GM12878 (cell line): ENCODE measurements at regions of chr2 and their contacts with region 1.

Region 1: GRCh38 chr2:240060977-240061591 is 7.8 kb upstream of the OR6B3 start:
- DNase-seq: no peak
- ATAC-seq: peak; percentile 87
- H3K4me3 ChIP-seq: no peak overlapping the region
- H3K27ac ChIP-seq: no peak overlapping the region
- H3K4me1 ChIP-seq: no peaks in the 10 kb centered on the region
- H3K27me3 ChIP-seq: peaks cover 0 to 4% of the 10 kb centered on the region in 2 experiments; a peak in 2 of 4 replicates
- CTCF ChIP-seq: peak; percentile 51 to 62 (median 59)
- EP300 ChIP-seq: no peak
- POLR2A ChIP-seq: no peak
- RAD21 ChIP-seq: peak; percentile 69

Region 2: DNA sequence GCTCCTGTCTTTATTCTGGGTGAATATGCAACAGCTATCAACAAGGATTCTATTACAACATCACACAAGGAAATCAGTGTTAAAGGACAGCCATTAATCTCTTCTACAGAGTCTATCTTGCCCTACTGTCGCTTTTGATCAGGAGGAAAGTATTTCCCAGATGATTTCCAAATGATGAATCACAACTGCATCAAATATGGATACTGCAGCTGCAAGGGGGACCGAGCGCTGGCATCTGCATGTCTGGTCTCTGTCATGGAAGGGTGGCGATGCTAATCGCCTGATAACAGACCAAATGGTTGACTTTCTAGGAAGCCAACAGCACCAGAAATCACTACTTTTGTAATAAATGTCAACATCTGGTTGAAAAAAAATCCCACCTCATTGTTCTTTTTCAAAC is 13.5 kb after region 1 on chr2:
- CTCF ChIA-PET with region 1: interaction called, 10 read pairs
- POLR2A ChIA-PET with region 1: no interaction called
- RAD21 ChIA-PET with region 1: interaction called, 3 read pairs
- SMC1A ChIA-PET with region 1: interaction called, 6 read pairs
- in situ Hi-C with region 1: no loop called
- intact Hi-C with region 1: no loop called
- DNase-seq: no peak
- ATAC-seq: no peak
- H3K4me3 ChIP-seq: no peak overlapping the region
- H3K27ac ChIP-seq: no peak overlapping the region
- H3K4me1 ChIP-seq: no peaks in the 10 kb centered on the region
- H3K27me3 ChIP-seq: peaks cover 0 to 2% of the 10 kb centered on the region in 2 experiments; a peak in 1 of 4 replicates
- CTCF ChIP-seq: no peak
- EP300 ChIP-seq: no peak
- POLR2A ChIP-seq: no peak
- RAD21 ChIP-seq: no peak

Region 3: DNA sequence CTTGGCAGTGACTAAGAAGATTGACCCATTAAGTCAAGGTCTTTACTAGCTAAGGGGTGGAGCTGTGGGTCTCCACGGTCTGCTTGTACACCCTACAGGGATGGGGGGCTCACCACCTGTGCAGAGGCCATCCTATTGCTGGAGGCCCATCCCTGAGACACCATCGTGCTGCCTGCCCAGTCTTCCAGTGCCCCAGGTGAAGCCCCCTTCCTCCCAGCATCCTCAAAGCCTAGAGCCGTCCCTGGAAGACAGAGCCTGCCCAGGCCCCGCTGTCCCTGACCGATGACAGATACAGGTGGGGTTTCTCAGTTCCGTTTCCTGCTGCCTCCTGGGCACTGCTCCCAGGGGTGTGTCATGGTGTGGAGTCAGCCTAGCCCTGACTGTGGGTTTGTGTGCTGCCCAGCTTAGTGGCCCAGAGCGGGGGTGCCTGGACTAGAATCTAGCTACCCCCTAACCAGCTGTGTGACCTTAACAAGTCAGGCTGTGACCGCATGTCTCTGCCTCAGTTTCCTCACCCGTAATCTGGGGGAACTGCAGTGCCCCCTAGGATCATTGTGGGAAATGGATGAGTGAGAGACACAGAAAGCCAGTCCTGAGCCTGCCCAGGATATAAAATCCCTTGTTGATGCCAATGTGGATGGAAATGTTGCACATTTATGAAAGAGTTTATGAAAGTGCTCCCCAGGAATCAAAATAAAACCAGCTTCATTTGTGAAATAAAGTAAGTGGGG is 77.3 kb after region 1 on chr2:
- CTCF ChIA-PET with region 1: interaction called, 78 read pairs
- POLR2A ChIA-PET with region 1: no interaction called
- RAD21 ChIA-PET with region 1: interaction called, 33 read pairs
- SMC1A ChIA-PET with region 1: interaction called, 33 read pairs
- in situ Hi-C with region 1: loop called (anchors 5 kb)
- intact Hi-C with region 1: loop called (anchors 1 kb)
- DNase-seq: no peak
- ATAC-seq: no peak
- H3K4me3 ChIP-seq: no peak overlapping the region
- H3K27ac ChIP-seq: no peak overlapping the region
- H3K4me1 ChIP-seq: no peaks in the 10 kb centered on the region; the same call in 1 of the 2 replicates
- H3K27me3 ChIP-seq: peaks cover 0 to 2% of the 10 kb centered on the region in 2 experiments; a peak in 2 of 4 replicates
- CTCF ChIP-seq: no peak
- EP300 ChIP-seq: no peak
- POLR2A ChIP-seq: no peak
- RAD21 ChIP-seq: no peak

Region 4: GRCh38 chr2:240143801-240144648 is 82.9 kb after region 1 on chr2:
- CTCF ChIA-PET with region 1: interaction called, 78 read pairs
- POLR2A ChIA-PET with region 1: no interaction called
- RAD21 ChIA-PET with region 1: interaction called, 33 read pairs
- SMC1A ChIA-PET with region 1: interaction called, 33 read pairs
- in situ Hi-C with region 1: loop called (anchors 5 kb)
- intact Hi-C with region 1: loop called (anchors 1 kb)
- DNase-seq: no peak
- ATAC-seq: peak; percentile 98
- H3K4me3 ChIP-seq: no peak overlapping the region
- H3K27ac ChIP-seq: no peak overlapping the region
- H3K4me1 ChIP-seq: no peaks in the 10 kb centered on the region
- H3K27me3 ChIP-seq: peaks cover 0 to 2% of the 10 kb centered on the region in 2 experiments; a peak in 2 of 4 replicates
- CTCF ChIP-seq: peak; percentile 80 to 94 (median 91)
- EP300 ChIP-seq: no peak
- POLR2A ChIP-seq: no peak
- RAD21 ChIP-seq: peak; percentile 93

Region 5: DNA sequence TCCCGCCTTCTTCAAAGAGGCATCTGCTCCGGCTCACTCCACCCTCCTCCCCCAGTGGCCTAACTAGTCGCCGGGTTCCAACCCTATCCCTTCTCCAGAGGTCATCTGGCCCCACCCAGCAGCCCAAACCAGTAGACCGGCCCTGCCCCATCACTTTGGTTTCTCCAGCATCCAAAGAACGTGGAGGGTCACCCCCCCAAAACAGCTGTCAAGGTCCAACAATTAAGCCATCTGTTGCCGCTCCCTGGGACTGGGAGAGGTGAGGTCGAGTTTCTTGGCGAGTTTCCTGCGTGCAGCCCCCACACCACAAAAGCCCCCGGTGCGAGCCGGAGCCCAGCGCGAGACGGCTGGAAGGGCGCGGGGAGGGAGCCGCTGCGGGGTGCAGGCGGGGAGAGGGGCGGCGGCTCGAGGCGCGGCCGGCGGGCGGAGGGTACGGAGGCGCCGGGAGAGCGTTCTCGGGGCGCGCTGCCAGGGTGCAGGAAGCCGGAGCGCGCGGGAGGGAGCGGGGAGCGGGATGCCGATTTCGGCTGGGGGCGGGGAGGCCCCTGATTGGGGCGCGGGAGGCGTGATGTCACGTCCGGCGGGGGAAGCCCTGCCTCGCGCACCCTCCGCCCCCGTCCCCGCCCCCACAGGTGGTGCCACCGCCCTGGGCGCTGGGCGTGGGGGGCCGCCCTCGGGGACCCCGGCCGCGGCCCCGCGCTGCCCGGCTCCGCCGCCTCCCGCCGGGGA is 373.8 kb after region 1 on chr2:
- CTCF ChIA-PET with region 1: no interaction called
- POLR2A ChIA-PET with region 1: no interaction called
- RAD21 ChIA-PET with region 1: no interaction called
- SMC1A ChIA-PET with region 1: no interaction called
- in situ Hi-C with region 1: loop called (anchors 10 kb)
- intact Hi-C with region 1: loop called (anchors 5 kb)
- DNase-seq: no peak
- ATAC-seq: peak; percentile 69
- H3K4me3 ChIP-seq: peak overlapping the region; percentile 64; the same call in 1 of the 2 replicates
- H3K27ac ChIP-seq: no peak overlapping the region
- H3K4me1 ChIP-seq: no peaks in the 10 kb centered on the region
- H3K27me3 ChIP-seq: peaks cover 7 to 17% of the 10 kb centered on the region in 2 experiments
- CTCF ChIP-seq: no peak
- EP300 ChIP-seq: no peak
- POLR2A ChIP-seq: peak; percentile 37; the same call in 1 of the 2 replicates
- RAD21 ChIP-seq: no peak

Region 6: GRCh38 chr2:240449764-240450531 is 388.9 kb after region 1 on chr2:
- CTCF ChIA-PET with region 1: interaction called, 3 read pairs
- POLR2A ChIA-PET with region 1: no interaction called
- RAD21 ChIA-PET with region 1: no interaction called
- SMC1A ChIA-PET with region 1: no interaction called
- in situ Hi-C with region 1: loop called (anchors 10 kb)
- intact Hi-C with region 1: no loop called
- DNase-seq: no peak
- ATAC-seq: peak; percentile 70
- H3K4me3 ChIP-seq: no peak overlapping the region
- H3K27ac ChIP-seq: no peak overlapping the region
- H3K4me1 ChIP-seq: no peaks in the 10 kb centered on the region
- H3K27me3 ChIP-seq: peaks cover 9 to 11% of the 10 kb centered on the region in 2 experiments
- CTCF ChIP-seq: no peak
- EP300 ChIP-seq: no peak
- POLR2A ChIP-seq: no peak
- RAD21 ChIP-seq: no peak